Ovary (tissue), 10 donors: ENCODE measurements at regions of chr4 and their contacts with region 1.

Region 1: DNA sequence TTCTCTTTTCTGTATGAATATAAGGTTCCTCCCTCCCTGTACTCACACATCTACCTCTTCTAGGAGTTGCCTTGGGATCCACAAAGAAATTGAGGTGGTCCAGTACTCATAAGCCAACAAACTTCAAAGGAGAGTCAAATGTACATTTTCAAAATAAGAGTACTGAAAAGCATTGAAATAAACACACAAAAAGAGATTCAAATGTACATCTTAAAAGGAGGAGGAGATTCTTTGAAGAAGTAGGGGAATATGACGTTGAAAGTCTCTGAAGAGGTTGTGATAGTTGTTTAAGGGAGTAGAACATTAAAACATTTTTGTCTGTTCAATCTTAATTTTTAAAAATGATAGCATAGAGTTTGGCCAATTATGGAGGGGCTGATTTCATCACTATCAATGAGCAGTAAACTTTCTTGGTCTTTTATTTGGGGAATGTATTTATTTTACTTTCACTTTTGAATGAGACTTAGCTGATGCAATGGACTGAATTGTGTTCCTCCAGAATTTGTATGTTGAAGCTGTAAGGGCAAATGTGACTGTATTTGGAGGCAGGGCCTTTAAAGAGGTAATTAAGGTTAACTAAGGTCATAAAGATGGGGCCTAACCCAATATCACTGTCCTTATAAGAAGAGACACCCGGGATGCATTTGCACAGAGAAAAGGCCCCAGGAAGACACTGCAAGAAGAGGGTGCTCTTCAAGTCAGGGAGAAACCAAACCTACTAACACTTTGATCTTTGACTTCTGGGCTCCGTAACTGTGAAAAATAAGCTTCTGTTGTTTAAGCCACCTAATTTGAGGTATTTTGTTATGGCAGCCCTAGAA is 226.3 kb upstream of the PGRMC2 start:
- DNase-seq: no peak
- H3K4me3 ChIP-seq: no peak overlapping the region
- H3K27ac ChIP-seq: no peak overlapping the region
- H3K4me1 ChIP-seq: peaks cover 16% of the 10 kb centered on the region
- H3K27me3 ChIP-seq: no peaks in the 10 kb centered on the region
- CTCF ChIP-seq: no peak
- EP300 ChIP-seq: no peak
- POLR2A ChIP-seq: no peak

Region 2: DNA sequence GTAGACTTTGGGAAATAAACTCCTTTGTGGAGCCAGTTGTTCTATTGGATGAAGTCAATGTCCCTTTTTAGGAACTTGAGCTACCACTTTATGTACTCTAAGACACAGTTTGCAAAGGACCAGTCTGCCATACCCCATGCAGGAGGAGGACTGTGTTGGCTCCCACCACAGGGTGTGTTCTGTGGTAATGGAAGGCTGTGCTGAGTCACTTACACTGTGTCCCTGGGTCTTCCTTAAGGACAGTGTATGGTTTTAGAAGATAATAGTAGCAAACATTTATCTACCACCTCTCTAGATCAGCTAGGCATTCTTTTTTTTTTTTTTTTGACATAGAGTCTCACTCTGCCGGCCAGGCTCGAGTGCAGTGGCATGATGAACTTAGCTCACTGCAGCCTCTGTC is 42.3 kb before region 1 on chr4:
- intact Hi-C with region 1: loop called in 1 of 4 experiments (anchors 5 kb)
- DNase-seq: no peak
- H3K4me3 ChIP-seq: no peak overlapping the region
- H3K27ac ChIP-seq: no peak overlapping the region
- H3K4me1 ChIP-seq: peaks cover 5% of the 10 kb centered on the region
- H3K27me3 ChIP-seq: no peaks in the 10 kb centered on the region
- CTCF ChIP-seq: no peak
- EP300 ChIP-seq: no peak
- POLR2A ChIP-seq: no peak